Activated B cell treated with CpG ODN at 0.5 μM for 24 hours (primary cell): ENCODE measurements at regions of chr14 and their contacts with region 1.

Region 1: DNA sequence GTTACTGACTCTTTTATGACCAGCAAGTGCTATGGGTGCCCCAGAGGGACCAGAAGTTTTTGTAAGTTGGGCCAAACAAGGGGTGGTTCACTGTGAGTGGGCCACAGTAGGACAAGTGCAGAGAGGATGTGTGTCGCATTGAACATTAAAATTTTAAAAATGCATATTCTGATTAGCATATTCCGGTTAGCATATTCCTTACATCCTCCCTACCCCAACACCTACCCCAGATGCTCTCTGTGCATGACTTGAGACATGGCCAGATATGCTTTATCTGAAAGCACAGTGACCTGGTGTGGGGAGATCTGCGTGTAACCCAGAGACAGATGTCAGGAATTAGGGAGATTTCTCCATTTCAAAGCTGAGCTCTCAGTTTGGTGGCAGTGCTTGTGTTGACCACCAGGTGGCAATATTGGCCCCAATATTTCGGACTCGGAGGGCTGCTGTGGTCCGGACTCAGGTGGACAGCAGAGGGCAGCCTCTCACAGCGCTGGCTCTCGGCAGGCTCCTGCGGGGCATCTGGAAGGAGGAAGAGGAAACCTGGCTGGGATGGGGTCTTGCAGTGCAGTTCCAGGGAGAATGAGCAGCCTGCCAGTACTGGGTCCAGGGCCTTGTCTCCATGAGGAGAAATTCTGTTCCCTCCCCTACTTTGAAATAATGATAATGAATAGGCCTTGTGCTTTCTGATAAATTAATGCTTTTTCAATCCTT is 1.6 kb upstream of the CEBPE start:
- DNase-seq: peak; percentile 67
- ATAC-seq: peak; percentile 87
- H3K4me3 Mint-ChIP-seq: peak overlapping the region; percentile 67
- H3K27ac Mint-ChIP-seq: peak overlapping the region; percentile 89
- H3K4me1 Mint-ChIP-seq: peaks cover 36% of the 10 kb centered on the region
- H3K27me3 Mint-ChIP-seq: no peaks in the 10 kb centered on the region
- CTCF ChIP-seq: peak; percentile 84

Region 2: DNA sequence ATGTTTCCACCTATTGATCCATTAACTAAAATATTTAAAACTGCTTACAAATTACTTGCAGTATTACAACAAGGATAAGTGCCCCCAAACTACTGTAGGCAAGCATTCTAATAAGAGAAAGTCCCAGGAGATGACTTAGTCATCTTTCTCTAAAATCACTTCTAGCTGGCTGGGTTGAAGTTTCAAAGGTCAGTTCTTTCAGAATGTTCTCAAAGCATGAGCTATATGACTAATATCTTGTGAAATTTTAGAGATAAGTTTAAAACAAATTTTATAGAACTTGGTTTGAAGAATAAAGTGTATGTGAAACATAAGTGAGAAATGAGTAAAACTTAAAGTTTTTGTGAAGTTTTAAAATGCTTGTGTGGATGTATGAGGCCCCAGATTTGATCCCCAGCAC is 452.3 kb before region 1 on chr14:
- CTCF ChIA-PET with region 1: no interaction called
- POLR2A ChIA-PET with region 1: no interaction called
- intact Hi-C with region 1: no loop called
- DNase-seq: no peak
- ATAC-seq: no peak
- H3K4me3 Mint-ChIP-seq: no peak overlapping the region
- H3K27ac Mint-ChIP-seq: no peak overlapping the region
- H3K4me1 Mint-ChIP-seq: no peaks in the 10 kb centered on the region
- H3K27me3 Mint-ChIP-seq: peaks cover 2% of the 10 kb centered on the region
- CTCF ChIP-seq: no peak

Region 3: GRCh38 chr14:23068476-23069412 is 52.0 kb before region 1 on chr14:
- CTCF ChIA-PET with region 1: interaction called, 10 read pairs
- POLR2A ChIA-PET with region 1: no interaction called
- intact Hi-C with region 1: no loop called
- DNase-seq: no peak
- ATAC-seq: peak; percentile 85
- H3K4me3 Mint-ChIP-seq: peak overlapping the region; percentile 22
- H3K27ac Mint-ChIP-seq: peak overlapping the region; percentile 50
- H3K4me1 Mint-ChIP-seq: peaks cover 36% of the 10 kb centered on the region
- H3K27me3 Mint-ChIP-seq: no peaks in the 10 kb centered on the region
- CTCF ChIP-seq: peak; percentile 79

Region 4: DNA sequence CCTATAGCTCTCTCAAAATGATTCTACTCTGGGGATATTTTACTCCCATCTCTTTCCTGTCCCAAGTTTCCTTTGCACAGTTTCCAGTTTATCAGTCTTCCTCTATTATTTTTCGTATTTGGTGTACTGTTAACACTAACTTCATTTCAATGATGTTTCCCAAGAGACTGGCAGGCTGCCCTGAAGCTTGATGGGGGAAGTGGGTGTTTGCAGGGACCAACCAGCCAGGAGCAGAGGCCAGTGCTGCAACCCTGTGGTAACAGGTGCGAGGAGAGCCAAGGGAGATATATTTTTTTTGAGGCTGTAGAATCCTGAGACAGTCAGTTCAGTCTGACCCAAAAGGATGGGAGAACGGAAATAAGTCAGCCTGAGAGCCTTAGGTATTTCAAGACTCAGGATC is 10.2 kb after region 1 on chr14:
- CTCF ChIA-PET with region 1: interaction called, 12 read pairs
- POLR2A ChIA-PET with region 1: interaction called, 3 read pairs
- intact Hi-C with region 1: no loop called
- DNase-seq: no peak
- ATAC-seq: no peak
- H3K4me3 Mint-ChIP-seq: no peak overlapping the region
- H3K27ac Mint-ChIP-seq: no peak overlapping the region
- H3K4me1 Mint-ChIP-seq: peaks cover 14% of the 10 kb centered on the region
- H3K27me3 Mint-ChIP-seq: no peaks in the 10 kb centered on the region
- CTCF ChIP-seq: no peak

Region 5: DNA sequence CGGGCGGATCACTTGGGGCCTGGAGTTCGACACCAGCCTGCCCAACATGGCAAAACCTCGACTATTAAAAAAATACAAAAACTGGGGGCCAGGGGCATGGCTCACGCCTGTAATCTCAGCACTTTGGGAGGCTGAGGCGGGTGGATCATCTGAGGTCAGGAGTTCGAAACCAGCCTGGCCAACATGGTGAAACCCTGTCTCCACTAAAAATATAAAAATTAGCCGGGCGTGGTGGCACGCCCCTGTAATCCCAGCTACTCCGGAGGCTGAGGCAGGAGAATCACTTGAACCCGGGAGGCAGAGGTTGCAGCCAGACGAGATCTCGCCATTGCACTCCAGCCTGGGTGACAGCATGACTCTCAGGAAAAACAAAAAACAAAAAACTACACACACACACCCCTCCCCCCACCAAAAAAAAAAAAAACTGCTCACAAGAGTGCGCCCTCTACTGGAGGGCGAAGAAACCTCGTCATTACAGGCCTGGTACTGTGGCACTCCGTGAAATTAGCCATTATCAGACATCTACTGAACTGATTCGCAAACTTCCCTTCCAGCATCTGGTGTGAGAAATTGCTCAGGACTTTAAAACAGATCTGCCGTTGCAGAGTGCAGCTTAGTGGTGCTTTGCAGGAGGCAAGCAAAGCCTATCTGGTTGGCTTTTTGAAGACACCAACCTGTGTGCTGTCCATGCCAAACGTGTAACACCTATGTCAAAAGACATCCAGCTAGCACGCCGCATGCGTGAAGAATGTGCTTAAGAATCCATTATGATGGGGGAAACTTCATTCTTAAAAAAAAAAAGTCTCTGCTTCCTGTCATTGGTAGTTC is 174.3 kb after region 1 on chr14:
- CTCF ChIA-PET with region 1: interaction called, 15 read pairs
- POLR2A ChIA-PET with region 1: no interaction called
- intact Hi-C with region 1: loop called (anchors 1 kb)
- DNase-seq: peak; percentile 30
- ATAC-seq: peak; percentile 88
- H3K4me3 Mint-ChIP-seq: no peak overlapping the region
- H3K27ac Mint-ChIP-seq: no peak overlapping the region
- H3K4me1 Mint-ChIP-seq: peaks cover 15% of the 10 kb centered on the region
- H3K27me3 Mint-ChIP-seq: no peaks in the 10 kb centered on the region
- CTCF ChIP-seq: no peak

Region 6: DNA sequence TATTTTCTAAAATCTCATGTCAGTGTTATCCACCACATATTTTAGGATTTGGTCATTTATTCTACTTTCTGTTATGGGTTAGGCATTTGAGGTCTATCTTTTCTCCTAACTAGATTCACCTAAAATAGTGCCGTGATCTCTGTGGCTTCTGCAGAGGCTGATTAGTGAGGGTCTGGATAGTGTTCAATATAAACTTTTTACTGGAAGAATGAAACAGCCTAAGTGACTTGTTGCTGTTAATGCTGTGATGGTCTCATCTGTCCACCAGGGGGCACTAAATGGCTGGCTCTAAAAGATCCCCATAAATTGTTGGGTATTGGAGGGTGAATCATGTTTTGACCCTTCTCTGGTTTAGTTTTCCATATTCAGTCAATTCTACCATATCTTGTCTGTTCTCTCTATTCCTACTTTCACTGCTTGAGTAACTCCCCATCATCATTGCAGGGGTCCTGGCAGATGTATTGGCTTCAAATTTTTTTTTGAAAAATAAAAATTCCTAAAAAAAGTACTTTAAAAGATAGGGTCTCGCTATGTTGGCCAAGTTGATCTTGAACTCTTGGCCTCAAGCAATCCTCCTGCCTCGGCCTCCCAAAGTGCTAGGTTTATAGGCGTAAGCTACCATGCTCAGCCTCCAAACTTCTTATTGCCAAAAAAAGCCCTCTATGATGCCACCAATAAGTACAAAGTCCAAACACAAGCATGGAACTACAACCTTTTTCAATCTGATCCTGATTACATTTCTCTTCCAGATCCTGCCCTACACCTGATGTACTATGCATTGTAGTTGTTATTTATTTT is 207.4 kb after region 1 on chr14:
- CTCF ChIA-PET with region 1: interaction called, 30 read pairs
- POLR2A ChIA-PET with region 1: no interaction called
- intact Hi-C with region 1: loop called (anchors 1 kb)
- DNase-seq: no peak
- ATAC-seq: peak; percentile 73
- H3K4me3 Mint-ChIP-seq: no peak overlapping the region
- H3K27ac Mint-ChIP-seq: no peak overlapping the region
- H3K4me1 Mint-ChIP-seq: peaks cover 3% of the 10 kb centered on the region
- H3K27me3 Mint-ChIP-seq: no peaks in the 10 kb centered on the region
- CTCF ChIP-seq: peak; percentile 42

Region 7: GRCh38 chr14:23469127-23469905 is 348.6 kb after region 1 on chr14 and contains the start of gene NGDN:
- CTCF ChIA-PET with region 1: no interaction called
- POLR2A ChIA-PET with region 1: no interaction called
- intact Hi-C with region 1: loop called (anchors 10 kb)
- DNase-seq: peak; percentile 80
- ATAC-seq: peak; percentile 90
- H3K4me3 Mint-ChIP-seq: no peak within 1 kb of the TSS
- H3K27ac Mint-ChIP-seq: no peak within 1 kb of the TSS
- H3K4me1 Mint-ChIP-seq: peaks cover 11% of the 10 kb centered on the region
- H3K27me3 Mint-ChIP-seq: no peaks in the 10 kb centered on the region
- CTCF ChIP-seq: no peak
- total RNA-seq, gene NGDN: 60.5 and 67.4 TPM in 2 replicates